Left ventricle myocardium inferior (tissue), 1 donor: ENCODE measurements at regions of chr20 and their contacts with region 1.

Region 1: GRCh38 chr20:9903048-9903655 is 64.3 kb upstream of the PAK5 start:
- DNase-seq: no peak
- H3K4me3 ChIP-seq: no peak overlapping the region
- H3K27ac ChIP-seq: no peak overlapping the region
- H3K4me1 ChIP-seq: no peaks in the 10 kb centered on the region
- H3K27me3 ChIP-seq: peaks cover 21% of the 10 kb centered on the region
- CTCF ChIP-seq: no peak

Region 2: GRCh38 chr20:9626357-9626756 is 276.8 kb before region 1 on chr20:
- intact Hi-C with region 1: loop called (anchors 10 kb)
- DNase-seq: no peak
- H3K4me3 ChIP-seq: no peak overlapping the region
- H3K27ac ChIP-seq: no peak overlapping the region
- H3K4me1 ChIP-seq: no peaks in the 10 kb centered on the region
- H3K27me3 ChIP-seq: peaks cover 41% of the 10 kb centered on the region
- CTCF ChIP-seq: no peak

Region 3: DNA sequence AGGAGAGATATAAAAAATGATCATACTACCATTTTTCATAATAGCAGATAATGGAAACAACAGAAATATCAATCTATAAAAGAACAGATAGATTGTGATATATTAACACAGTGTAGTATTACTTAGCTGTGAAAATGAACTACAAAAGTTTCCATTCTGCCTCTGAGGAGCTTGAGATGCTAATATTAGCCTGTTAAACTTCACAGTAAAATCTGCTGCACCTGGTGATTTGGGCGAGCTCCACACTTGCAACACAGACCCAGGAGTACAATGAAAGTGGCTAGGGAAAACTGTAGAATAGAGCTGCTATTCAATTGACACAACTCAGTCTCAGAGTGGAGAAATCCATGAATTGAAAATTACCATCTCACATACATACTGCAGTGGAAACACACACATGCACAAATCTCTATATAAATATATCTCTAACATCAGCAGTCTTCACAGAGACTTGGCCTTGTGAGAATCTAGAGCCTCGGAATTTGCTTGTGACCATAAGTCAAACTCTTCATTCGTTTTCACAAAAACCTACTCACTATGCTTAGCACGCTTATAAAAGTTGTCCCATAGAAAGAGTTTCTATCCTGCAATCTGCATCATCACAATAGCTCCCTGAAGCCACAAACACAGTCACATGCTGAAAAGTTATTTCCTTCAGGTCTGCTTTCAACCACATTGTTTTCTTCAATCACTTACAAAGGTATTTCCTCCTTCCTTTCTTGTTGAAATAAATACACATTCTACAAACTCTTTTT is 197.3 kb before region 1 on chr20:
- intact Hi-C with region 1: no loop called
- DNase-seq: no peak
- H3K4me3 ChIP-seq: no peak overlapping the region
- H3K27ac ChIP-seq: no peak overlapping the region
- H3K4me1 ChIP-seq: no peaks in the 10 kb centered on the region
- H3K27me3 ChIP-seq: no peaks in the 10 kb centered on the region
- CTCF ChIP-seq: no peak

Region 4: GRCh38 chr20:9966966-9967365 is 63.8 kb after region 1 on chr20:
- intact Hi-C with region 1: loop called (anchors 10 kb)
- DNase-seq: no peak
- H3K4me3 ChIP-seq: no peak overlapping the region
- H3K27ac ChIP-seq: no peak overlapping the region
- H3K4me1 ChIP-seq: no peaks in the 10 kb centered on the region
- H3K27me3 ChIP-seq: peaks cover 72% of the 10 kb centered on the region
- CTCF ChIP-seq: no peak